Right ventricle myocardium superior (tissue), 1 donor: ENCODE measurements at regions of chr18 and their contacts with region 1.

Region 1: GRCh38 chr18:69705987-69706386 is 241.7 kb downstream of the CD226 start:
- DNase-seq: no peak
- ATAC-seq: no peak

Region 2: GRCh38 chr18:69757733-69758132 is 51.7 kb after region 1 on chr18:
- intact Hi-C with region 1: loop called (anchors 10 kb)
- DNase-seq: no peak
- ATAC-seq: no peak

Region 3: DNA sequence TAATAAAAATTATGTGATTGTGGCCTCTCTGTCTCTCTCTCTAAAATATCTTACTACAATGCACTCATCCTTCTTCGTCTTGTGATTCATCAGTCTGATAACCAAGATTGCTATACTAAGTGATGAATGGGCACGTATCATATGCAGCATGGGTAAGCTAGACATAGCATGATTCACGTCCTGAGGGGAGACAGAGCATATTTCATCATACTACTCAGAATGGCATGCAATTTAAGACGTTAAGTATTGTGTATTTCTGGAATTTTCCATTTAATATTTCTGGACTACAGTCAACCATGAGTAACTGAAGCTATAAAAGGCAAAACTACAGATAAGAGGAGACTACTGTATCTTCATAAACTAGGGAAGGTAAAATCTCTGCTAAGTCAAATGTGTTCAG is 338.6 kb after region 1 on chr18:
- intact Hi-C with region 1: no loop called
- DNase-seq: no peak
- ATAC-seq: no peak